ENCODE measurements at regions of chr3 and their contacts with region 1.

Region 1: DNA sequence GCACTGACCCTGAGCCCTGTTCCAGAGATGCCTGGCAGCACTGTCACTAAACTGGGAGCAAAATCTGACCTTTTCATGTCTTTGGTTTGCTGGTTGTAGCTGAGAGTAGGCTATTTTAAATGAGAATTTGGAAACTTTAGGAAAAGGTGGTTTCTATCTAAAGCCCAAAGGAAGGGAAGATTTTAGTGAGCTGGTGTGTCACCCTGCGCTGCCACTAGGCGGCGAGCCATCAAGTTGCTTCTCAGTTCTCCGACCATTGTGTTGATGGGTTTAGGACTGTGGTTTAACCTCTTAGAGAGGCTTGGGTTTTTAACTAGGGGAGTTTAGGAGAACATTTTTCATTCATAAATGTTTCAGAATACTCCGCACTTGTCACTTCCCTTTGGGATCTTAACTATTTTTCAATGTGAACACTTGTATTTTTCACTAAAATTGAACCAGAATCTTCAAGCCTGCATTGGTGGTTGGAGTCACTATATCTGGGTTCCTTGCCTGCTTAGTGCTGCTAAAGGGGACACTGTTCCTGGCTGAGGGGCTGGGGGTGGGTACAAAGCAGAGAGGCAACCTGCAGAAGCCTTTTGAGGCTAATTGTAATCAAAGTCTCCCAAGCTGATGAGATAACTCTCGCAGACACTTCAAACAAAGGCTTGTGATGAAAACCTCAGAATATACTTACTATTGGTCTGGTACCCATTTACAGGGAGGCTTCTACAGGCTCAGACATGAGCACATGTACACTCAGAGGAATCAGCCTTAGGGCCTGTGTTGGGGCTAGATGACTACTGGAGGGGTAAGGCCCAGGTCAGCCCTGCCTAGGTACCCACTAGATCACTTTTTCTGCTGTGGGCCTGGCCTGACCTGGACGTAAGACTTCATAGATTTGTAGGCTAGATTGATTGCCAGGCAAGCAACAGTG is 16.8 kb downstream of the EXOSC7 start:
- DNase-seq: peak; percentile 44
- H3K4me3 Mint-ChIP-seq: no peak overlapping the region
- H3K27ac Mint-ChIP-seq: no peak overlapping the region
- H3K4me1 Mint-ChIP-seq: peaks cover 58% of the 10 kb centered on the region
- H3K27me3 Mint-ChIP-seq: no peaks in the 10 kb centered on the region

Region 2: GRCh38 chr3:45011756-45012508 is 19.1 kb after region 1 on chr3:
- CTCF ChIA-PET with region 1: interaction called, 21 read pairs
- DNase-seq: no peak
- H3K4me3 Mint-ChIP-seq: no peak overlapping the region
- H3K27ac Mint-ChIP-seq: peak overlapping the region; percentile 83
- H3K4me1 Mint-ChIP-seq: peaks cover 21% of the 10 kb centered on the region
- H3K27me3 Mint-ChIP-seq: no peaks in the 10 kb centered on the region

Region 3: GRCh38 chr3:45037734-45038455 is 45.1 kb after region 1 on chr3:
- CTCF ChIA-PET with region 1: interaction called, 16 read pairs
- DNase-seq: peak; percentile 96
- H3K4me3 Mint-ChIP-seq: no peak overlapping the region
- H3K27ac Mint-ChIP-seq: no peak overlapping the region
- H3K4me1 Mint-ChIP-seq: peaks cover 59% of the 10 kb centered on the region
- H3K27me3 Mint-ChIP-seq: peaks cover 71% of the 10 kb centered on the region

Region 4: GRCh38 chr3:45092132-45093031 is 99.6 kb after region 1 on chr3:
- CTCF ChIA-PET with region 1: no interaction called
- DNase-seq: no peak
- H3K4me3 Mint-ChIP-seq: no peak overlapping the region
- H3K27ac Mint-ChIP-seq: no peak overlapping the region
- H3K4me1 Mint-ChIP-seq: peaks cover 3% of the 10 kb centered on the region
- H3K27me3 Mint-ChIP-seq: peaks cover 89% of the 10 kb centered on the region

Measured in activated naive CD4-positive, alpha-beta T cell treated with anti-CD3 and anti-CD28 coated beads, Interleukin-2, amount 10 ng/mL, durations not matched to agents 7 days and 5 days (primary cell).